PC-9 (cell line): ENCODE measurements at regions of chr3 and their contacts with region 1.

Region 1: GRCh38 chr3:49007068-49007770 is at the start of gene WDR6:
- DNase-seq: peak; percentile 90 to 97
- H3K4me3 ChIP-seq: peak within 1 kb of the TSS; percentile 81
- H3K27ac ChIP-seq: peak within 1 kb of the TSS; percentile 87
- H3K4me1 ChIP-seq: peaks cover 9% of the 10 kb centered on the region; the same call in 1 of the 2 replicates
- H3K27me3 ChIP-seq: no peaks in the 10 kb centered on the region
- CTCF ChIP-seq: peak; percentile 60
- total RNA-seq, gene WDR6: 157 and 159 TPM in 2 replicates

Region 2: GRCh38 chr3:49021813-49022687 is 14.8 kb after region 1 on chr3 and contains the start of gene NDUFAF3:
- CTCF ChIA-PET with region 1: interaction called, 3 read pairs
- POLR2A ChIA-PET with region 1: interaction called, 22 read pairs
- intact Hi-C with region 1: no loop called
- DNase-seq: peak; percentile 87 to 97
- H3K4me3 ChIP-seq: peak within 1 kb of the TSS; percentile 70
- H3K27ac ChIP-seq: peak within 1 kb of the TSS; percentile 87
- H3K4me1 ChIP-seq: peaks cover 29% of the 10 kb centered on the region
- H3K27me3 ChIP-seq: no peaks in the 10 kb centered on the region
- CTCF ChIP-seq: peak; percentile 90
- total RNA-seq, gene NDUFAF3: 32.9 and 38.8 TPM in 2 replicates

Region 3: GRCh38 chr3:49035281-49035680 is 28.1 kb after region 1 on chr3:
- CTCF ChIA-PET with region 1: no interaction called
- POLR2A ChIA-PET with region 1: no interaction called
- intact Hi-C with region 1: no loop called
- DNase-seq: no peak
- H3K4me3 ChIP-seq: no peak overlapping the region
- H3K27ac ChIP-seq: no peak overlapping the region
- H3K4me1 ChIP-seq: no peaks in the 10 kb centered on the region
- H3K27me3 ChIP-seq: no peaks in the 10 kb centered on the region
- CTCF ChIP-seq: no peak

Region 4: GRCh38 chr3:49406571-49407566 is 399.6 kb after region 1 on chr3:
- CTCF ChIA-PET with region 1: no interaction called
- POLR2A ChIA-PET with region 1: interaction called, 13 read pairs
- intact Hi-C with region 1: no loop called
- DNase-seq: no peak
- H3K4me3 ChIP-seq: no peak overlapping the region
- H3K27ac ChIP-seq: peak overlapping the region; percentile 23; the same call in 1 of the 2 replicates
- H3K4me1 ChIP-seq: peaks cover 24% of the 10 kb centered on the region
- H3K27me3 ChIP-seq: no peaks in the 10 kb centered on the region
- CTCF ChIP-seq: no peak

Region 5: GRCh38 chr3:49519296-49519695 is 512.1 kb after region 1 on chr3:
- CTCF ChIA-PET with region 1: no interaction called
- POLR2A ChIA-PET with region 1: no interaction called
- intact Hi-C with region 1: no loop called
- DNase-seq: no peak
- H3K4me3 ChIP-seq: no peak overlapping the region
- H3K27ac ChIP-seq: no peak overlapping the region
- H3K4me1 ChIP-seq: no peaks in the 10 kb centered on the region
- H3K27me3 ChIP-seq: no peaks in the 10 kb centered on the region
- CTCF ChIP-seq: no peak

Region 6: GRCh38 chr3:50466177-50466576 is 1459.0 kb after region 1 on chr3:
- CTCF ChIA-PET with region 1: no interaction called
- POLR2A ChIA-PET with region 1: no interaction called
- intact Hi-C with region 1: no loop called
- DNase-seq: no peak
- H3K4me3 ChIP-seq: no peak overlapping the region
- H3K27ac ChIP-seq: no peak overlapping the region
- H3K4me1 ChIP-seq: no peaks in the 10 kb centered on the region
- H3K27me3 ChIP-seq: peaks cover 69% of the 10 kb centered on the region
- CTCF ChIP-seq: no peak